HEK293 (cell line): ENCODE measurements at regions of chr17 and their contacts with region 1.

Region 1: GRCh38 chr17:50139950-50140871 is 10.3 kb upstream of the SAMD14 start:
- H3K4me3 ChIP-seq: no peak overlapping the region
- H3K27ac ChIP-seq: no peak overlapping the region
- H3K4me1 ChIP-seq: no peaks in the 10 kb centered on the region
- CTCF ChIP-seq: peak; percentile 87

Region 2: DNA sequence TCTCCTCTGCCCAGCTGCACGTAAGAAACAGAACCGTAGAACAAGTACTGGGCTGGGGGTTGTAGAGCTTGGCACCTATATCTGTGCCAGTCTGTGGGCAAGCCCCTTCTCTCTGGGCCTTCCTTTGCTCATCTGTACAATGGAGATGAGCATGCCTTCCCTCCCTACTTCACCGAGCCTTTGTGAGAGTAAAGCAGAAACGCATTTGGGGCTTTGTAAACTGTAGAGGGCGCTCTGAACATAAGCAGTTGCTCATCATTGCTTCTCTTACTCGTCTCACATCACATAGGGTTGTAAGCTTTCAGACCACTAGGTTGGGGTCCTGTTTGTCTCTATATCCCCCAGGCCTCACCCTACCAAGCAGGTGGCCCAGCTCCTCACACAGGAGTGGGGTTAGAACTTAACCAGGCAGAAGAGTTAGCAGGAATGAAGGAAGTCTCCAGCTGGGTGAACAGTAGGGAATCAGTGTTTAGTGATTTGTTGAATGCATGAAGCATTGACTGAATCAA is 25.3 kb before region 1 on chr17:
- CTCF ChIA-PET with region 1: interaction called, 34 read pairs
- POLR2A ChIA-PET with region 1: interaction called, 4 read pairs
- H3K4me3 ChIP-seq: no peak overlapping the region
- H3K27ac ChIP-seq: no peak overlapping the region
- H3K4me1 ChIP-seq: no peaks in the 10 kb centered on the region; the same call in 1 of the 2 replicates
- CTCF ChIP-seq: peak; percentile 58

Region 3: DNA sequence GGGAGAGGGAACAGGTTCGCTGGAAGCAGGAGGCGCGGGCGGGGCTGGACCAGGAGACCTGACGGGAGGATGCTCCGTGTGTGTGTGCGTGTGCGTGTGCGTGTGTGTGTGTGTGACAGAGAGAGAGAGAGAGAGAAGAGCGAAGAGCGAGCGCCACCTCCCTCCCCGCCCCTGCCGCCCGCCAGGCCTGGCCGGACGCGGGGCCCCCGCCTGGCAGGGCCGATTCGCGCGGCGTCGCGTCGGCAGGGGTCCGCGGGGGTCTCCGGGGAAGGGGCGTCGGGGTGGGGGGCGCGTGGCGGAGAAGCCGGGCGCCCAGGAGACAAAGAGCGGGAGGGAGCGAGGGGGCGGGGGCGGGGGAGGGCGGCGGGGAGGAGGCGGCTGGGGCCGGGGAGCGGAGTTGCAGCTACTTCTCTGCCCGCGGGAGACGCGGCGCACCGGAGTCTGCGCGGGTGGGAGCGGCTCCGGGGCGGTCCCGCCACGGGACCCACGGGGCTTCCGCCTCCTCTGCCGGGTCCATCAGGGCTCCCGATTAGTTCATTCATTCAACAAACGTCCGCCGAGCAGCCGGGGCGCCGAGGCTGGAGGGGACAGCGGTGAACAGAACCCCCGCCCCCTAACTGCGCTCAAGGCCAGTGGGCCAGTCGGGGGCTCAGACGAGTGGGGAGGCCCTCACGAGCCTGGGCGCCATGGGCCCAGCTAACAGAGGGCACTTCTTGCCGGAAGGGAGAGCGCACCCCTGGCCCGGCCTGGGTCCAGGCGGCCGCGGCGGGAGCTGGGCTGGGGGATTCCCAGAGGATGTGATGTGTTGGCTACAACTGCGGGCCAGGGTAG is 10.3 kb before region 1 on chr17 and contains the start of gene SAMD14:
- CTCF ChIA-PET with region 1: interaction called, 23 read pairs
- POLR2A ChIA-PET with region 1: interaction called, 7 read pairs
- H3K4me3 ChIP-seq: peak within 1 kb of the TSS; percentile 35
- H3K27ac ChIP-seq: no peak within 1 kb of the TSS
- H3K4me1 ChIP-seq: no peaks in the 10 kb centered on the region
- CTCF ChIP-seq: no peak

Region 4: DNA sequence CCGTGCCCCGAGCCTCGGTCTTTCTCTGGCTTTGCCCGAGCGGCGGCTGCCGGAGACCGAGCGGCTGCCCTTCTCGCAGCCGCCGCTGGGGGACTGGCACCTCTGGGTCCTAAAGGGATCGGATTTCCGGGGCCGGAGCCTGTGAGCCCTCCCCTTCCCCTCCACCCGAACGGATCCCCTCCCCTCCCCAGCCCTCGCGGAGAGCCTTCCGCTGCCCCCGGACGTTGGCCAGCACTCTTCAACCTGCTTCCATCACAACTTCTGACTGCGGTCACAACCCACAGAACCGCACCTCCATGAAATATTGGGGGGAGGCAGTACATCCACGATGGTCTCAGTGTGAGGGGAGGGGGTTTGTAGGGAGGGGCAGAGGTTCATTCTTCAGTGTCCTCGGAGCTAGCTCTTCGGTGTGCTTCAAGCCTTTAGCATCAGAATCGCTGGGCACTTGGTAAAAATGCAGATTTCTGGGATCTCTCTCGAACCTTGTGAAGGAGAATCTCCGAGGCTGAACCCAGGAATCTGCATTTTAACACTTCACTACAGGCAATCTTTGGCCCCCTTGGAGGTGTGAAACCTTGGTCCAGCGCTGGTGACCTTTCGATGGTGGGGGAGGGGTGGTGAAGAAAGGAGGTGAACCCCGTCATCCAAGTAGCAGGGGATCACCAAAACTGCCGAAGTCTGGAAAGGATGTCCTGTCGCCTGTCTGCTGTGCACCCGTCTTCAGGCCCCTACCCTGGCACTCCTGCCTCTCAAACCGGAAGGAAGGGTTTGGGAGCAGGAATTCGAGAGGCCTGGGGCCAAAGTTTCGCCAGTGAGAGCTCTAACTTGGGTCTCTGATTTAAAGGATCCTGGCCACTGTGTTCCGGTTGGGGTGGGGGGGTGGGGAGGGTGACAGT is 11.1 kb after region 1 on chr17:
- CTCF ChIA-PET with region 1: interaction called, 52 read pairs
- POLR2A ChIA-PET with region 1: interaction called, 10 read pairs
- H3K4me3 ChIP-seq: peak overlapping the region; percentile 77
- H3K27ac ChIP-seq: peak overlapping the region; percentile 93
- H3K4me1 ChIP-seq: peaks cover 15% of the 10 kb centered on the region
- CTCF ChIP-seq: peak; percentile 67

Region 5: GRCh38 chr17:50161023-50161910 is 21.1 kb after region 1 on chr17:
- CTCF ChIA-PET with region 1: interaction called, 33 read pairs
- POLR2A ChIA-PET with region 1: interaction called, 3 read pairs
- H3K4me3 ChIP-seq: peak overlapping the region; percentile 54
- H3K27ac ChIP-seq: peak overlapping the region; percentile 17; the same call in 1 of the 2 replicates
- H3K4me1 ChIP-seq: no peaks in the 10 kb centered on the region
- CTCF ChIP-seq: peak; percentile 100

Region 6: DNA sequence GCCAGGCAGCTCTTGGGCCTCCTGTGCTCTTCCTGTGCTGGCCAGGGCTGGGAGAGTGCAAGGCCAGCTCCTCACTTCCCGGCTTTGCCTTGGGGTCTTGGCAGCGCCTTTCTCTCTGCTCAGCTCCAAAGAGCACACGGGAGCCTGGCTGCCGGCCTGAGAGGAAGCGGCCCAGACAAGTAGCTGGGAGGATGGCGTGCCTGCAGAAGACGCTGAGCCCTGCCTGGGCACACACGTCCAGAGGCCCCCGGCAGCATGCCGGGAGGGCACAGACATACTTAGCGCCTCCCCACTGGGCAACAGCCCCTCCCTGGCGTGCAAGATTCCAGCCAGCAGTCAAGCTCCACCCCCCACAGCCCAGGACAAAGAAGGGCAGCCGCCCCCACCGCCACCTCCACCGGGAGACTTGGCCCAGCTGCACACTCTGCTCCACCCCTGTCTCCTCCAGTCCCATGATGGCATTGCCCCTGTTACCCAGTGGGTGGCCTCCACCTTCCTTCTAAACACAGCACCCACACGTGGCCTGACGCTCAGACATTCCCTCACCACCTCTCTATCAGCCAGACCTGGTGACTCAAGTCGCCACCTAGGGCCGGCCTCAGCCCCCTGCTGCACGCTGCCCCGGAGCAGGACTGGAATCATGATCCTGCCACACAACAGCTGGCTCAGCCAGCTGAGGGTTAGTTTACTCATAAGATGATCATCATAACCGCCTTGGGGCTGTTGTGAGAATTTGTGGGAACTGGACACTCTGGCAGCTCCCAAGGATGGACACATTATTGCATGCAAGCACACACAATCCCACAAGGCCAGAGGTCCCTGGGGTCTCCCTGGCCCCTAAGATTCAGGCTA is 38.0 kb after region 1 on chr17:
- CTCF ChIA-PET with region 1: interaction called, 12 read pairs
- POLR2A ChIA-PET with region 1: interaction called, 3 read pairs
- H3K4me3 ChIP-seq: no peak overlapping the region
- H3K27ac ChIP-seq: peak overlapping the region; percentile 76
- H3K4me1 ChIP-seq: peaks cover 11% of the 10 kb centered on the region
- CTCF ChIP-seq: peak; percentile 99

Region 7: DNA sequence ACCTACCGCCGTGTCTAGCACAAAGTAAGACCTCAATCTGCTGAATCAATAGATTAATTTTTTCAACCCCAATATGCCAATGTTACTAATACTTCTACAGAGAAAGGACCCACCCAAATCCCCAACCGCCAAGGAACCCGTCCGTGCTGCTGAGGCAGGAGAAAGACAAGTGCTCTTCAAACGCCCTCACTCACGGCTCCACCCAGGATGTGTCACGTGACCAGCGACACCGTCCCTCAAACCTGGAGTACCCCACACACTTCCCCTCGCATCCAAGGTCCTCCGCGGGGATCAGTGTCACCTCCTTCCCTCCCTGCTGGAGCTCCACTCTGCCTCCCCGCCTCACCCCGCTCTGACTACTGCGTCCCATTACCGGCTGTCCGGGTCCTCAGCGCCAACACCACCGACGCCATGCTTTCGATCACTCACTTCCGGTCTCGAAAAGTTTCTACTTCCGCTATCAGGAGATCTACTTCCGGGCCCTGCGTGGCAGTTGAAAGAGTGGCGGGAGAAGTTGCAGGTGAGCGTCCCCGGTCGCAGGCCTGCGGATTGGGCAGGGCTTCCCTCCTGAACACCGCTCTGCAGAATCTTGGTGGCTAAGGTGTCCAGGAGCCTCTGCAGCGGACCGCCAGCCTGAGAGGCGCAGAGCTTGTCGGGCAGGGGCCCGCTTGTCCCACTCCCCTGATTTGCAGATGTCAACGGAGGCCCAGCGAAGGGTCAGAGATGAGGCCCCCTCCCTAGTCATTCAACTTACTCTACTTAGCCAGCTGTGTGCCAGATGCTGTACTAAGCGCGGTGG is 232.7 kb after region 1 on chr17 and contains the starts of genes EME1 and MRPL27:
- CTCF ChIA-PET with region 1: no interaction called
- POLR2A ChIA-PET with region 1: no interaction called
- H3K4me3 ChIP-seq: peak within 1 kb of the TSS; percentile 97
- H3K27ac ChIP-seq: peak within 1 kb of the TSS; percentile 86
- H3K4me1 ChIP-seq: peaks cover 8% of the 10 kb centered on the region
- CTCF ChIP-seq: no peak